Ovary (tissue), 10 donors: ENCODE measurements at regions of chr14 and their contacts with region 1.

Region 1: DNA sequence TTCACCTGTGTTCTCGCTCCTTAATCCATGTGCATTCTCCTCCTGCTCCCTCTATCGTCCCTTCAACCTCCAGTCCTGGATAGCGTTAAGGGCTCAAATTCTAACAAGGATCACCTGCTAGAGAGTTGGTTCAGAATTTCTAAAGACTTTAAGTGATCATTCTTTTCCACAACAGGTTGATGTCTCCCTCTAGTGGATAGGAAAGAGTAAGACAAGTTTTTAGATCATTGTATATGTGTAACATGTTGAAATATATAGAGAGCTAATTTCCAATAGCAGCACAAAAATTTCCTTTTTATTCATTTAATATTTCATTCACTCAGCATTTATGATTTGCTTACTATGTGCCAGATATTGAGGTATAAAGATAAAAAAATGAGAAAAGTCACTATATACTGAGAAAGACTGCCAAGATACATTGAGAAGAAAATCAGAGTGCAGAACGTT is 9.3 kb upstream of the ESR2 start:
- DNase-seq: no peak
- H3K4me3 ChIP-seq: no peak overlapping the region
- H3K27ac ChIP-seq: no peak overlapping the region
- H3K4me1 ChIP-seq: no peaks in the 10 kb centered on the region
- H3K27me3 ChIP-seq: no peaks in the 10 kb centered on the region
- CTCF ChIP-seq: peak; percentile 68 to 75 (median 72)
- EP300 ChIP-seq: no peak
- POLR2A ChIP-seq: no peak

Region 2: DNA sequence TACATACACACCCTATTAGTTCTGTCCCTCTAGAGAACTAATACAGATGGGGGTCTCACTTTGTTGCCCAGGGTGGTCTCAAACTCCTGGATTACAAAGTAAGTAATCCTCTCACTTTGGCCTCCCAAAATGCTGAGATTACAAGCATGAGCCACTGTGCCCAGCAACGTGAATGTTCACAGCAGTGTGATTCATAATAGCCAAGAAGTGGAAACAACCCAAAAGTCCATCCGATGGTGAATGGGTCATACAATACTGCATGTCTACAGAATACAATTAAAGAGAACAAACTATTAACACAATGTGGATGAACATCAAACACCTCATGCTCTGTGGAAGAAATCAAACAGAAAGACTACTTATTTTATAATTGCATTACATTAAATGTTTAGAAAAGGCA is 508.0 kb before region 1 on chr14:
- intact Hi-C with region 1: loop called (anchors 5 to 10 kb)
- DNase-seq: no peak
- H3K4me3 ChIP-seq: no peak overlapping the region
- H3K27ac ChIP-seq: no peak overlapping the region
- H3K4me1 ChIP-seq: no peaks in the 10 kb centered on the region
- H3K27me3 ChIP-seq: no peaks in the 10 kb centered on the region
- CTCF ChIP-seq: no peak
- EP300 ChIP-seq: no peak
- POLR2A ChIP-seq: no peak

Region 3: GRCh38 chr14:63800651-63801375 is 502.7 kb before region 1 on chr14:
- intact Hi-C with region 1: loop called (anchors 5 to 10 kb)
- DNase-seq: no peak
- H3K4me3 ChIP-seq: no peak overlapping the region
- H3K27ac ChIP-seq: no peak overlapping the region
- H3K4me1 ChIP-seq: no peaks in the 10 kb centered on the region
- H3K27me3 ChIP-seq: no peaks in the 10 kb centered on the region
- CTCF ChIP-seq: no peak
- EP300 ChIP-seq: no peak
- POLR2A ChIP-seq: no peak

Region 4: DNA sequence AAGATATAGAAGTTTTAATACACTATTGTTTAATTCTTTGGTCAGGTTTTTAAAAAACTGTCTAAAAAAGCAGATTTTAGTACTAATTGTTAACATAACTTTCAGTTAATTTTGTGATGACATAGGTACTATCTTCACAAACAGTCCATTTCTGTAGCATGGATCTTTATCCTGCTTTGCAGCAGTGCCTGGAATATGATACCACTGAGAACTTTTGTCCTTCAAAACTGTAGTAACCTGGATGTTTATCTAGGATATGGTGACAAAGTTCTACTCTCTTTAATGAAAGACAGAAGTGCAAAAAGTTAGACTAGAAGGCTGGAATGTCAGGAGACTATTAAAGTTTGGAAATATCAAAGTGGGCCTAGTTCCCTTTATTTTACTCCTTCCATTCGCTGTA is 290.8 kb before region 1 on chr14:
- intact Hi-C with region 1: loop called in 2 of 4 experiments (anchors 10 kb)
- DNase-seq: no peak
- H3K4me3 ChIP-seq: no peak overlapping the region
- H3K27ac ChIP-seq: no peak overlapping the region
- H3K4me1 ChIP-seq: no peaks in the 10 kb centered on the region
- H3K27me3 ChIP-seq: no peaks in the 10 kb centered on the region
- CTCF ChIP-seq: no peak
- EP300 ChIP-seq: no peak
- POLR2A ChIP-seq: no peak

Region 5: GRCh38 chr14:64137657-64138290 is 165.7 kb before region 1 on chr14:
- intact Hi-C with region 1: loop called in 3 of 4 experiments (anchors 5 to 10 kb)
- DNase-seq: peak; percentile 27 to 58 (median 46)
- H3K4me3 ChIP-seq: no peak overlapping the region
- H3K27ac ChIP-seq: no peak overlapping the region
- H3K4me1 ChIP-seq: no peaks in the 10 kb centered on the region
- H3K27me3 ChIP-seq: no peaks in the 10 kb centered on the region
- CTCF ChIP-seq: peak in 1 of 3 donors; percentile 27
- EP300 ChIP-seq: no peak
- POLR2A ChIP-seq: no peak